ENCODE measurements at regions of chr1 and their contacts with region 1.

Region 1: GRCh38 chr1:99264201-99265021 is at the start of gene PLPPR4:
- DNase-seq: peak; percentile 12
- H3K4me3 ChIP-seq: peak within 1 kb of the TSS; percentile 1 to 39 (median 18)
- H3K27ac ChIP-seq: no peak within 1 kb of the TSS
- H3K4me1 ChIP-seq: peaks cover 0 to 5% (median 0%) of the 10 kb centered on the region in 4 donors
- H3K27me3 ChIP-seq: peaks cover 28% of the 10 kb centered on the region
- CTCF ChIP-seq: no peak
- EP300 ChIP-seq: no peak
- POLR2A ChIP-seq: no peak
- total RNA-seq, gene PLPPR4: 0.37 to 21.5 (median 0.68) TPM

Region 2: DNA sequence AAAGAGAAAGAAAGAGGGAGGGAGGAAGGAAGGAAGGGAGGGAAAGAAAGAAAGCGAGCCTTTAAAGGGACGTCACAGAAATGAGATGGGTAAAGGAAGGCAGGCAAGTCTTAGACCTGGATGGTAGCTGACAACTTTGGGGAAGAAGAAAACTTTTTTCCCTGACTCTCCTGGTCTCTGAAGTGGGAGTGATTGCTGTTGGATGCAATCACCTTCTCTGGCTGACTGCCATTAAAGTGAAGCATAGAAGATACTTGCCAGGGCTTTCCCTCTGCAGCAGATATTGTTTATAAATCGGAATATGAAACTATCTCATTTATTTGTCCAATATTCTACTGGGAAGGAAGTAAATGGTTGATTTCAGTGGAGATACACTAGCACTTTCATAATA is 1482.1 kb after region 1 on chr1:
- in situ Hi-C with region 1: no loop called
- intact Hi-C with region 1: loop called (anchors 5 kb)
- DNase-seq: no peak
- H3K4me3 ChIP-seq: no peak overlapping the region
- H3K27ac ChIP-seq: no peak overlapping the region
- H3K4me1 ChIP-seq: no peaks in the 10 kb centered on the region
- H3K27me3 ChIP-seq: no peaks in the 10 kb centered on the region
- CTCF ChIP-seq: no peak
- EP300 ChIP-seq: no peak
- POLR2A ChIP-seq: no peak

Measured in transverse colon (tissue), 4 donors.